ENCODE measurements at regions of chr1 and their contacts with region 1.

Region 1: DNA sequence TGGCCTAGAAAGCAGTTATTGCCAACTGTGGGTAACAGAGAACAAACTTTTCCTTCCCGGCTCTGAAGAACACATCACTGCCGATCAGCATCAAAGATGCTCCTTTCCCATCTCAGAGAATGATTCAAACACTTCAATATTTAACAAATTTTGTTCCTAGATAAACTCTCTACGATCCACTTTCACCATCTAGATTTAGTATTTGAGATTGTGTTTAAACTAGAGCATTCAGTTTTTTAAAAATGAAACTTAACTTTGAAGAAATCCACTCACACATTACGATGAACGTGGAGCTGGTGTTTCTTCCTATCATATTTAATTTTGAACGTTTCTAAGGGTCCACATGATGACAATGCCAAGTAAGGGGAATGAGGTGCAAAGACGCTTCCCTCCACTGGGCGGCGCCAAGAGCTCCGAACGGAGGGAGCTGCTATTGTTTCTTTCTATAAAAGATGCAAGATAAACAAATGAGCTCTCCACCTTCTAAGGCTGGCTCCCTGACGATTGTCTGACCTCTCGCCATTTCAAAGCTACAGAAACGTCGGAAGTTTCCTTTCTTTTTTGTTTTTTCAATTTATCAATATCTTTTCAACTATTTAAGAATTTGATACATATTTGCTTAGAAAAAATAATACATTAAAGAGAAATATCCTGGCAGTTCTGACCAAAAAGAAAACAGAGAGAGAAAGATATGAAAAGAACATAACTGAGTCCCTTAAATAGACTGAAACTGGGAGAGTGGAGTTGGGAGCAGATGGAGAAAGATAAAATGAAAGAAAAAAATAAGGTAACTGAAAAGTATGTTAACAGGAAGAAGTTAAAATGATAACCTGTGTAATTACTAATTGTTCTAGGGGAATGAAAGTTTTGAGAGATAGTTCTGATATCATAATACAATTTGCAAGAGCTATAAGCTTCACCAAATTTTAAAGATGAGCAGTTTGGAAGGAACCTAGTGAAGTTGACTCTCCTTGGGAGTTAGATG is 4.4 kb upstream of the BARHL2 start:
- ATAC-seq: peak in 3 of 8 experiments; percentile 29 to 61 (median 48)
- H3K4me3 ChIP-seq: no peak overlapping the region
- H3K27ac ChIP-seq: no peak overlapping the region
- H3K4me1 ChIP-seq: peaks cover 14 to 24% of the 10 kb centered on the region in 2 donors

Region 2: DNA sequence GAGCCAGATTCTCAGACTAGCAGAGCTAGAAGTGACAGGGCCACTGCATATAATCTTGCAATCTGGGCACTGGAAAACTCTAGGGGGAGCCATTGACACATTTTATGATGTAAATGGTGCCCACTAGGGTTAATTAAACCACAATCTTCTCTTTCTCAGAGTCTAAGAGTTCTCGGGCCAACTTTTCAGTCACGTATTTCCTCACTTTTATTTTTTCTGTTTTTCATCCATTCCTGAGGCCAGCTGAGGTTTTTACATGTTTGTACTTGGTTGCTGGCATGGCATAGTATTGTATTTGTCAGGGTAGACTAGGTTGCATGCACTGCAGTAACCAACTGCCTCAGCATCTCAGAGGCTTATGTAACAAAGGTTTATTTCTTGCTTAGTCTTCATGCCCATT is 588.4 kb before region 1 on chr1:
- in situ Hi-C with region 1: loop called in 1 of 9 experiments (anchors 25 kb)
- ATAC-seq: peak; percentile 41 to 94 (median 72)
- H3K4me3 ChIP-seq: no peak overlapping the region
- H3K27ac ChIP-seq: no peak overlapping the region
- H3K4me1 ChIP-seq: peaks cover 0 to 21% of the 10 kb centered on the region in 2 donors

Region 3: GRCh38 chr1:90902672-90903071 is 181.2 kb after region 1 on chr1:
- in situ Hi-C with region 1: no loop called
- ATAC-seq: no peak
- H3K4me3 ChIP-seq: no peak overlapping the region
- H3K27ac ChIP-seq: no peak overlapping the region
- H3K4me1 ChIP-seq: no peaks in the 10 kb centered on the region

Region 4: GRCh38 chr1:90925928-90926869 is 204.7 kb after region 1 on chr1:
- in situ Hi-C with region 1: no loop called
- ATAC-seq: peak in 4 of 8 experiments; percentile 35 to 89 (median 74)
- H3K4me3 ChIP-seq: no peak overlapping the region
- H3K27ac ChIP-seq: no peak overlapping the region
- H3K4me1 ChIP-seq: peaks cover 15 to 28% of the 10 kb centered on the region in 2 donors

Region 5: DNA sequence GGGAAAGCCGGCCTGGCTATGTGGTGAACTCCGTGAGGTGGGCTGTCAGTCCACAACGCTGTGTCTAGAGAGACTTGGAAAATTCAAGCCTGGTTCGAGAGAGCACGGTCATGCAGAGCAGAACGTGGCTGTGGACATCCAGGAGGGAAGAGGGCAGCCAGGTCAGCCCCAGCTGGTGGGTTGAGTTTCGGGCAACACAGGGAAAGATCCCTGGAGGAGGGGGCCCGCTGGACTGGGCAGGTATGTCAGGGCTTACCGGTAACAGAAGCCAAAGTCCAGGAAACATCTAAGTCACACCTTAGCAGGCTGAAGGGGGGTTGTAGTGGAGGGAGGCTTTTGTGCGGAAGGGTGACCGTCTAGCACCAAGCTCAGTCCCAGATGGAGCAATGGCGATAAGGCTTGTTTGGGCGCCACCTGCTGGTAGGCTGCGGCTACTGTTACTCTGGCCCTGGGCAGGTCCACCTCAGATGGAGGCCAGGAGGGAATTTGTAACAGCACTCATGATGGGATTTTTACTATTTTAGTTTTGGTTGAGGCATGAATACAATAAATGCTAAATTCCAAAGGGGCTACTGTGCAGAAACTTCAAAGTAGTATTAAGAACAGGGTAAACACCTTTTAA is 443.6 kb after region 1 on chr1:
- in situ Hi-C with region 1: loop called in 1 of 9 experiments (anchors 25 kb)
- ATAC-seq: peak; percentile 98 to 100 (median 99)
- H3K4me3 ChIP-seq: no peak overlapping the region
- H3K27ac ChIP-seq: no peak overlapping the region
- H3K4me1 ChIP-seq: no peaks in the 10 kb centered on the region

Region 6: DNA sequence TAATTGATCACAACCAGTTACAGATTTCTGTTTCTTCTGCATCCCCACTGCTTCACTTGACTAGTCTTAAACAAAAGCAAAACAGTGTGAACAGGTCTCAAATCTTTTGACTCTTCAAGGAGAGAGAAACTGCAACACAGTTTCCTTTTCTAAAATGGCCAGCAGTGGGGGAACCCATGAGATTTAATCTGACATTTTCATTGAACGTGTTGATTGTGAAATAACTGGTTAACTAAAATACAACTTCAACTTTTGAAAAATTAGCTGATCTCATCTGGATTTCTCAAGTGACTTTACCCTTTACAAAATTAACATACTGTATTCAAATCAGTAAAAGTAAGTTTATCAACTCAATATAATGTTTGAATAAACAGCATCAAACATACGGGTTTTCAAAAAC is 540.2 kb after region 1 on chr1:
- in situ Hi-C with region 1: no loop called
- ATAC-seq: no peak
- H3K4me3 ChIP-seq: no peak overlapping the region
- H3K27ac ChIP-seq: no peak overlapping the region
- H3K4me1 ChIP-seq: no peaks in the 10 kb centered on the region

Measured in motor neuron (in vitro differentiated cells).